Activated B cell treated with CpG ODN at 0.5 μM for 24 hours (primary cell): ENCODE measurements at regions of chr2 and their contacts with region 1.

Region 1: DNA sequence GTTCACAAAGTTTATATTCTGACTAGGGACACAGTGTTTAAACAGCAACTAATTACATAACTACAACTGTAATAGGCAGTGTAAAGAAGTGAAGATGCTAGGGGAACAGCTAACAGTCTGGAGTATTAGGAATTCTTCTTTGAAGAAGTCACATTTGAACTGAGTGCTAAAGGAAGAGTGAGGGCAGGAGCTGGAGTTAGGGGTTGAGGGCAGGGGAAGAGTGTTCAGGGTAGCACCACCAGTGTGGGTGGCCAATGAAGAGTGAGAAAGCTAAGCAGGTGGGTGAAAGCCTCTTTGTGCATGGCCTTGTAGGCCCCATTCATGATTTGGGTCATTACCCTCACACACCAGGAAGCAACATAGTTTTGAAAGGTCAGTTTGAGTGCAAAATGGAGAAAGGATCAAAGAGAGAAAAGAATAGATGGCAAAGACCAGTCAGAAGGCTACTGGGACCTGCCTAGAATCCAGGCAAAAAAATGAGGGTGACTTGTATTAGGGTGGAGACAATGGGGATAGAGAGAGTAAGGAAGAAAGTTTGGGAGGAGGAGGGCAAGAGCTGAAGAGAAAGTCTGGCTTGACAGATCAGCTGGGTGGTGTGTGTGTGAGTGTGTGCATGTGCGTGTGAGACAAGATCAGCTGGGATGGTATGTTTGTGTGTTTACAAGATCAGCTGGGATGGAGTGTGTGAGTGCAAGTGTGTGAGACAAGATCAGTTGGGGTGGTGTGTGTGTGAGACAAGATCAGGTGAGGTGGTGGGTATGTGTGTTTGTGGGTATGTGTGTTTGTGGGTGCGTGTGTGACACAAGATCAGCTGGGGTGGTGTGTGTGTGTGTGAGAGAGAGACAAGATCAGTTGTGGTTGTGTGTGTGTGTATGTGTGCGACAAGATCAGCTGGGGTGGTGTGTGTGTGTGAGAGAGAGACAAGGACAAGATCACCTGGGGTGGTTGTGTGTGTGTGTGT is 43.6 kb upstream of the AGPS start:
- DNase-seq: no peak
- ATAC-seq: no peak
- H3K4me3 Mint-ChIP-seq: no peak overlapping the region
- H3K27ac Mint-ChIP-seq: no peak overlapping the region
- H3K4me1 Mint-ChIP-seq: peaks cover 16% of the 10 kb centered on the region
- H3K27me3 Mint-ChIP-seq: no peaks in the 10 kb centered on the region
- CTCF ChIP-seq: no peak

Region 2: DNA sequence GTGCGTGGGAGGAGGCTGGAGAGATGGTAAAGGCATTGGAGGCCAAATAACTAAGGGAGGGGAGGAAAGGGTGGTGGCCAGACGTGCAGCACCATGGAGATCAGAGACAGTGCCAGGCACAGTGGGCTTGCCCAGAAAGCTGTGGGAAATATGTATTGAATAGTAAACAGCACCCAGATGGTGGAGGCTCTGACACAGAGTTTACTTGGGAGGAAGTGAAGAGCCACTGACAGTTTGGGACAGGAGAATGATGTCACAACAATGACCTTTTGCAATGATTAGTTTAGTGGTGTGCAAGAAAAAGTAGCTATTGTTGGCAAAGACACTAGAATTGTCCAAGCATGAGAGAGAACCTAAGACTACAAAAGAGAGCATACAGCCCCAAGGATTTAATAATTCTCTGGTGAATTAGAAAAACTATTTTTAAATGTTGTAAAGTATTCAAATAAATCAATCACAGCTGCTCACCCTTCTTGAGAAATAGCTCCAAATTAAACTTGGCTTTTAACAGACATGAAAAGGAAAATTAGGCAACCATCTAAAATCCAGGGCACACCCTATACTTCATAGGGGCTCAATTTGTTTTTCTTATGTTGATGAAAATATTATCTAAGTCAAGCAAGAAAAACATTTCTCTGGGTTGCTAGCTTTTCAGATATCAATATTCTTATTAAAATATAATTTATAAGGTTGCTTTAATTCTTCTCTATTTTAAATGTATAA is 595.1 kb before region 1 on chr2:
- CTCF ChIA-PET with region 1: no interaction called
- POLR2A ChIA-PET with region 1: no interaction called
- intact Hi-C with region 1: no loop called
- DNase-seq: no peak
- ATAC-seq: no peak
- H3K4me3 Mint-ChIP-seq: no peak overlapping the region
- H3K27ac Mint-ChIP-seq: no peak overlapping the region
- H3K4me1 Mint-ChIP-seq: no peaks in the 10 kb centered on the region
- H3K27me3 Mint-ChIP-seq: no peaks in the 10 kb centered on the region
- CTCF ChIP-seq: no peak

Region 3: DNA sequence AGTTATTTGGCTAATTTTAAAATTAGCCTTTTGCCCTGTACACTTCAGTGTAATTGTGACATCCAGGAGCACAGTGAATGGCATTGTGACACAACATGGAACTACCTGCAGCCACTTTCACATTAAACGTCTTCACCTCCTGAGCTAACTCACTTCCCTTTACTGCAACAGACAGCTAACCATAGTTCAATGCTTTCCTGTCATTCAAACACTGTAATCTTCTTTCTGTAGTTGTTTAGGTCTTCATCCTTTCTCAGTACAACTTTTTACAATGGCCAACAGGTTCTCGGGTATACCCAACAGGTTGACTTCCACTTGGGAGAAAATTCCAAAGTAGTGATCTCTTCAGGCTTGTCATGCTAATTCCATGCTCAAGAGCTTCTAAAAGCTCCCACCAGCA is 34.9 kb after region 1 on chr2:
- CTCF ChIA-PET with region 1: no interaction called
- POLR2A ChIA-PET with region 1: no interaction called
- intact Hi-C with region 1: loop called (anchors 5 kb)
- DNase-seq: no peak
- ATAC-seq: no peak
- H3K4me3 Mint-ChIP-seq: no peak overlapping the region
- H3K27ac Mint-ChIP-seq: no peak overlapping the region
- H3K4me1 Mint-ChIP-seq: no peaks in the 10 kb centered on the region
- H3K27me3 Mint-ChIP-seq: no peaks in the 10 kb centered on the region
- CTCF ChIP-seq: no peak